Activated CD8-positive, alpha-beta T cell treated with anti-CD3 and anti-CD28 coated beads for 36 hours (primary cell): ENCODE measurements at regions of chr1 and their contacts with region 1.

Region 1: DNA sequence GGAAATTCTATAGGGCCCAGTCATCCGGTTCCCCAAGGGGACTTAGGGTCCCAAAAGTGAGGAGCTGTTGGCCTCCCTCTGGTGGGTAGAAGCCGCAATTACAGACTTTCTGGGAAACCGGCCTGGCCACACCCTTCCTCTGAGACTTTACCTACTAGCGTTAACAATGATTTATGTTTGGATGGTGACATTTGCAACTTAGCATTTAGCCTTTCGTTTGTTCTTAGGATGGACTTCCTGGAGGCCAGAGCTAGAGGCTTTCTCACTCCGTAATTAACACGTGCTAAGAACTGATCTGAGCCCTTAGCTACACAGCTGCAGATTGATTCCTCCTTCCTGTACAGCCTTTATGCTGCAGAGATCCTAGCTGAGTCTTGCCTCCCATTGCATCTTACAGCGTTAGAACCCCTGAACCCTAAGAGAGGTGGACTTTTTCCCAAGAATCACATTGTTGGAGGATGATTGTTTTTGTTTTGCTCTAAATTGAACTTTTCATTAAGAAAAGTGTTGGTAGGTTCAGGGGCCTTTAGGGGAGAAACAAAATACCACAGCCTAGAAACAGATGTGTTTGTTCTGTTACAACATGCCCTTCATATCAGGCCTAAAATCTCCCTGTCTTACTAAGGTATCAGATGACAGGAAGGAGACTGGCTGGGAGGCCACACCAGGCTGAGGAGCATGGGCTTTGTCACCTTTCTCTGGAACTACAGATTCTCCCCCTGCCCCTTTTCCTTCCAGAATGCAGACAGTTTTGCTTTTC is 2.0 kb downstream of the S100A11 start:
- DNase-seq: peak; percentile 84
- ATAC-seq: peak; percentile 78
- H3K4me3 Mint-ChIP-seq: peak overlapping the region; percentile 92
- H3K27ac Mint-ChIP-seq: peak overlapping the region; percentile 93
- H3K4me1 Mint-ChIP-seq: peaks cover 34% of the 10 kb centered on the region
- H3K27me3 Mint-ChIP-seq: no peaks in the 10 kb centered on the region
- CTCF ChIP-seq: peak; percentile 83

Region 2: GRCh38 chr1:151968058-151968457 is 66.8 kb before region 1 on chr1:
- CTCF ChIA-PET with region 1: interaction called, 15 read pairs
- POLR2A ChIA-PET with region 1: interaction called, 5 read pairs
- intact Hi-C with region 1: no loop called
- DNase-seq: peak; percentile 69
- ATAC-seq: peak; percentile 88
- H3K4me3 Mint-ChIP-seq: no peak overlapping the region
- H3K27ac Mint-ChIP-seq: no peak overlapping the region
- H3K4me1 Mint-ChIP-seq: peaks cover 22% of the 10 kb centered on the region
- H3K27me3 Mint-ChIP-seq: peaks cover 5% of the 10 kb centered on the region
- CTCF ChIP-seq: peak; percentile 81

Region 3: DNA sequence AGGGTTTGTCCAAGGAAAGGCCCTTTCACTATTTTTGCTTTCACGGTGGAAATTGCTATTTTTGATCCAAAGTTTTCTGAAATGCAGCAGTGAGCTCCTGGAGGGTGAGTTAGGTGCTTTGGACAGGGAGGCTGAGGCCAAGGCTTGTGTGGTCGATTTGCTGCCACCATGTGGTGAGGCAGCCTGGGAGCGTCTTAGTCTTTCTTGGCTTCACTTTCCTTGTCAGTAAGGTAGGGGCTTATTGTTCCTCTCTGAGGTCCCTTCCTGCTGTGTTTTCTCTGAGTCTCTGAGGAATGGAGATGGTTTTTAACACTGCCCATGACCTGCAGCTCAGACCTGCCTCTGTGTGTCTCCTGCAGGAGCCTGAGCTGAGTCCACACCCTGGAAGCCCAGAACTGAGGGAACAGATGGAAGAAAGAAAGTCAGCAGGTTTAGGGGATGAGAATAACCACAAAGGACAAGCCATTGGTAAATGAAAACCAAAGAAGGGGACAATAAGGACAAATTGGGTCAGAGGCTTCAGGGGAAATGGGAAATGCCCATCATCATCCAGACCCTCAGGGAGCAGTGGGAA is 21.1 kb before region 1 on chr1:
- CTCF ChIA-PET with region 1: interaction called, 18 read pairs
- POLR2A ChIA-PET with region 1: interaction called, 4 read pairs
- intact Hi-C with region 1: no loop called
- DNase-seq: peak; percentile 66
- ATAC-seq: peak; percentile 60
- H3K4me3 Mint-ChIP-seq: no peak overlapping the region
- H3K27ac Mint-ChIP-seq: no peak overlapping the region
- H3K4me1 Mint-ChIP-seq: peaks cover 3% of the 10 kb centered on the region
- H3K27me3 Mint-ChIP-seq: peaks cover 12% of the 10 kb centered on the region
- CTCF ChIP-seq: peak; percentile 60

Region 4: DNA sequence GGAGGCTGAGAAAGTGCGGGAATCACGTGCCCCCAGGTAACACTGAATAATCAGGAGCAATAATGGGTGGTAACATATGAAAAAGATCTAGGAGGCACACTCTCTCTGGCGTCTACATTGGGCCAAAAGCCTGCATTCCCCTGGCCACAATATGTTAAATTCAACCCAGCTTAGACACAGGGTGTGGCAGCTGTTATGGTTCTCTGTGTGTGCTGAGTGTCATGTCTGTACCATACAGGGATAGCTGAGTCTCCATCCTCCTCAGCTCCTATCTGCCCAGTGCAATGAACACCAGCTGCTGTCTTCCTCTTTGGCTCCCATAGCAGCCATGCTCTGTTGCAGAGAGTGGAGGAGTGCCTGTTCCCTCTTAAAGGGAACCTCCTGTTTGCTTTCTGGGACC is 12.4 kb before region 1 on chr1:
- CTCF ChIA-PET with region 1: interaction called, 10 read pairs
- POLR2A ChIA-PET with region 1: no interaction called
- intact Hi-C with region 1: no loop called
- DNase-seq: no peak
- ATAC-seq: no peak
- H3K4me3 Mint-ChIP-seq: no peak overlapping the region
- H3K27ac Mint-ChIP-seq: no peak overlapping the region
- H3K4me1 Mint-ChIP-seq: no peaks in the 10 kb centered on the region
- H3K27me3 Mint-ChIP-seq: peaks cover 1% of the 10 kb centered on the region
- CTCF ChIP-seq: no peak

Region 5: DNA sequence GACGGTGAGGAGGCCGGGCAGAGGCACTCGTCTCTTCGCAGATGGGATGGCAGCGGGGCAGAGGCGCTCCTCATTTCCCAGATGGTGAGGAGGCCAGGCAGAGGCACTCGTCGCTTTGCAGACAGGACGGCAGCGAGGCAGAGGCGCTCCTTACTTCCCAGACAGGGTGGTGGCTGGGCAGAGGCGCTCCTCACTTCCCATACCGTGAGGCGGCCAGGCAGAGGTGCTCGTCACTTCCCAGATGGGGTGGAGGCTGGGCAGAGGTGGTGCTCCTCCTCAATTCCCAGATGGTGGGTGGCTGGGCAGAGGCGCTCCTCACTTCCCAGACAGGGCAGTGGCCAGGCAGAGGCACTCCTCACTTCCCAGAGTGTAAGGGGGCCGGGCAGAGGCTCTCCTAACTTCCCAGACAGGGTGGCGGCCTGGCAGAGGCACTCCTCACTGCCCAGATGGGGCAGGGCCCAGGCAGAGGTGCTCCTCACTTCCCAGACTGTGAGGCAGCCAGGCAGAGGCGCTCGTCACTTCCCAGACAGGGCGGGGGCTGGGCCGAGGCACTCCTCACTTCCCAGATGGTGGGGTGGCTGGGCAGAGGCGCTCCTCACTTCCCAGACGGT is 44.1 kb after region 1 on chr1:
- CTCF ChIA-PET with region 1: no interaction called
- POLR2A ChIA-PET with region 1: no interaction called
- intact Hi-C with region 1: no loop called
- DNase-seq: no peak
- ATAC-seq: no peak
- H3K4me3 Mint-ChIP-seq: no peak overlapping the region
- H3K27ac Mint-ChIP-seq: no peak overlapping the region
- H3K4me1 Mint-ChIP-seq: no peaks in the 10 kb centered on the region
- H3K27me3 Mint-ChIP-seq: peaks cover 17% of the 10 kb centered on the region
- CTCF ChIP-seq: no peak